CD8-positive, alpha-beta T cell (primary cell): ENCODE measurements at regions of chr2 and their contacts with region 1.

Region 1: DNA sequence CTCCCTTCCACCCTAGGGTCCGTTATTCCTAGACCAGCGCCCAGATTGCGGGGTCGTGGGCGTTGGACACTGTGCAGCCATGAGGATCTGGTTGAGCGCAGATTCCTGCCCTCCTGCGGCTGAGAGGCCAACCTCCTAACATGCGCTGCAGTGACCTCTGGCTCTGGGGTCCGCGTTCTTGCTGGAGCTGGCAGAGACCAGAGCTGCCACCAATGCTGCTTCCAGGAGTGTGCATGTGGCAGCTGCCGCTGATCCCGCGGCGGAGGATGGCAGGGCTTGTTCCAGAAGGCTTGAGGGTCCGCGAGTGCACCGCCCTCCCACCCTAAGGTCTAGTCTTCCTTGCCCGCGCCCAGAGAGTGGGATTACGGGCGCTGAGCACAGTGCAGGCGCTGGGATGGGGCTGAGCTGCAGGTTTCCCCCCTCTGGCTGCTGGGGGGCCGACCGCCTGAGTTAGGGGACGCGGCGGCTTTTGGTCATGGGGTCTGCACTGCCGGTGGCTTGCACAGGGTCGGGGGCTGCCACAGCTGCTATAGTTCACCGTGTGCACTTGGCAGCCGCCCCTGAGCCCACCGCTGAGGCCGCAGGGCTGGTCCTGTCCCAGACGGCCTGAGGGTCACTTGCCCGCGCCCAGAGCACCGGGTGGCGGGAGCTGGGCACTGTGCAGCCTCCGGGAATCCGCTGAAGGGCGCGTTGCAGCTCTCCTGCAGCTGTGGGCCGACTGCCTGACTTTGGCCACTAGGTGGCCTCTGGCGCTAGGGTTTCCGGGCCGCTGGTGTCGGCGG is 145.9 kb downstream of the CCDC74A start:
- DNase-seq: peak; percentile 28 to 75 (median 56)
- ATAC-seq: peak; percentile 54
- H3K4me3 ChIP-seq: peak overlapping the region; percentile 39 to 50
- H3K4me3 Mint-ChIP-seq: peak overlapping the region; percentile 67
- H3K27ac ChIP-seq: no peak overlapping the region
- H3K27ac Mint-ChIP-seq: no peak overlapping the region
- H3K4me1 ChIP-seq: peaks cover 14% of the 10 kb centered on the region
- H3K4me1 Mint-ChIP-seq: peaks cover 4% of the 10 kb centered on the region
- H3K27me3 ChIP-seq: peaks cover 0 to 5% of the 10 kb centered on the region in 2 experiments
- H3K27me3 Mint-ChIP-seq: peaks cover 33% of the 10 kb centered on the region
- CTCF ChIP-seq: peak; percentile 81

Region 2: DNA sequence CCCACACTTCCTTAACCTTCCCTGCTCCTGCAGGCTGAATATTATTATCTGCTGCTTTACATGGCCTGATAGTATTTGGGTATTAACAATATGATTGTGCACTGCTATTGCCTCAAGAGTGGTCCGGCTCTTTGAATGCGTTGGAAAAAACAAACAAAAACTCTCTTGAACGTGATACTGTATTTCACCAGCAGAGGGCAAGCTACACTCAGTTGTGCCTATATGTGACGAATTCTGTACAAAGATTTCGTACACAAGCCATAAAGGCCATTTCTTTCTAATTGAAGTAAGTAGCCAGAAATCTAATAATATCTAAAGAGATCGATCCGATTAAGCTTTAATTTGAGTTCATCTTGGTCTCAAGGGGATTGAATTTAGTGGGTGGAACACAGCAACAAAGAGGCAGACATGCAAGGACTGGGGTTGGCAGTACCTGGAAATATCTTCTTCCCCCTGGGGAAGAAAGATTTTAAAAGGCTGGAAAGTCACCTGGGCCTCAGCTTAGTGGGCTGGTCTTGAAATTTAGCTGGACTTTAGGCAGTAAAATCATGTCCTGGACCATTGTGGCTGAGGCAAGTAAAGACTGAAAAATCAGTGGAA is 260.3 kb before region 1 on chr2:
- CTCF ChIA-PET with region 1: interaction called, 32 read pairs
- POLR2A ChIA-PET with region 1: no interaction called
- intact Hi-C with region 1: loop called in 1 of 2 experiments (anchors 1 kb)
- DNase-seq: peak in 2 of 9 experiments; percentile 53 to 63
- ATAC-seq: no peak
- H3K4me3 ChIP-seq: no peak overlapping the region
- H3K4me3 Mint-ChIP-seq: no peak overlapping the region
- H3K27ac ChIP-seq: no peak overlapping the region
- H3K27ac Mint-ChIP-seq: no peak overlapping the region
- H3K4me1 ChIP-seq: no peaks in the 10 kb centered on the region
- H3K4me1 Mint-ChIP-seq: no peaks in the 10 kb centered on the region
- H3K27me3 ChIP-seq: no peaks in the 10 kb centered on the region
- H3K27me3 Mint-ChIP-seq: peaks cover 33% of the 10 kb centered on the region
- CTCF ChIP-seq: peak; percentile 94

Region 3: DNA sequence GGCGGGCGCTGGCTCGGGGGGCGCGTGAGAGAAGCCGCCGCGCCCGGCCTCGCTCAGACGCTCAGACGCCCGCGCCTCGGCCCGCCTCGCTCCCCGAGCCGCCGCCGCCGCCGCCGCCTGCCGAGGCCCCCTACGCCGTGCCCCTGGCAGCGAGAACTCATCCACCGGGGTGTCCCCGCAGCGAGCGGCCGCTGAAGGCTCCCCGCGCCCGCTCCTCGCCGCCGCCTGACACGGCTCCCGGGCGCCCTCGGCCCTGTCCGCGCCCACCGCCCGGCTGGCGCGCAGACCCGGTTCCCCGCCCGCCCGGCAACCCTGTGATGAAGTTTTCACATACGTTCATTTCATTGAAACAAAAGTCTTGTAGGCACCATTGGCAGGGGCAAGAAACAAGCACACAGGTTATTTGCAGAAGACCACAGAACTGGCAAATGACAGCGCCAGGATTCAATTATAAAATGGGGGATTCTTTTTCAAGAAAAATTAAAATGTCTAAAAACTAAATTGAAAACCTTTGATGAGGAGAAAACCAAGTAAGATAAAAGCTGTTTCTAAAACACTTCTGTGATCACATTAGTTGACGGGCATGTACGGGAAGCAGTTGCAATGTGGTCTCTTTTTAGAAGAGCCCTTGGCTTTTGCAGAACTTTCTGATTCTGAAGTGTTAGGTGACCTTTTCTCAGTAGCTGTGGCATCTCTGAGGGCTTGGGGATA is 248.2 kb before region 1 on chr2:
- CTCF ChIA-PET with region 1: no interaction called
- POLR2A ChIA-PET with region 1: no interaction called
- intact Hi-C with region 1: no loop called
- DNase-seq: no peak
- ATAC-seq: no peak
- H3K4me3 ChIP-seq: no peak overlapping the region
- H3K4me3 Mint-ChIP-seq: no peak overlapping the region
- H3K27ac ChIP-seq: no peak overlapping the region
- H3K27ac Mint-ChIP-seq: no peak overlapping the region
- H3K4me1 ChIP-seq: no peaks in the 10 kb centered on the region
- H3K4me1 Mint-ChIP-seq: peaks cover 6% of the 10 kb centered on the region
- H3K27me3 ChIP-seq: peaks cover 5 to 6% of the 10 kb centered on the region in 2 experiments
- H3K27me3 Mint-ChIP-seq: peaks cover 56% of the 10 kb centered on the region
- CTCF ChIP-seq: no peak

Region 4: GRCh38 chr2:131659168-131659572 is 14.4 kb before region 1 on chr2:
- CTCF ChIA-PET with region 1: interaction called, 17 read pairs
- POLR2A ChIA-PET with region 1: no interaction called
- intact Hi-C with region 1: no loop called
- DNase-seq: no peak
- ATAC-seq: no peak
- H3K4me3 ChIP-seq: no peak overlapping the region
- H3K4me3 Mint-ChIP-seq: no peak overlapping the region
- H3K27ac ChIP-seq: no peak overlapping the region
- H3K27ac Mint-ChIP-seq: no peak overlapping the region
- H3K4me1 ChIP-seq: no peaks in the 10 kb centered on the region
- H3K4me1 Mint-ChIP-seq: no peaks in the 10 kb centered on the region
- H3K27me3 ChIP-seq: no peaks in the 10 kb centered on the region
- H3K27me3 Mint-ChIP-seq: peaks cover 21% of the 10 kb centered on the region
- CTCF ChIP-seq: no peak

Region 5: GRCh38 chr2:131801210-131801744 is 127.7 kb after region 1 on chr2:
- CTCF ChIA-PET with region 1: interaction called, 15 read pairs
- POLR2A ChIA-PET with region 1: no interaction called
- intact Hi-C with region 1: no loop called
- DNase-seq: peak in 2 of 9 experiments; percentile 12 to 14
- ATAC-seq: no peak
- H3K4me3 ChIP-seq: no peak overlapping the region
- H3K4me3 Mint-ChIP-seq: peak overlapping the region; percentile 5
- H3K27ac ChIP-seq: no peak overlapping the region
- H3K27ac Mint-ChIP-seq: no peak overlapping the region
- H3K4me1 ChIP-seq: no peaks in the 10 kb centered on the region
- H3K4me1 Mint-ChIP-seq: peaks cover 3% of the 10 kb centered on the region
- H3K27me3 ChIP-seq: peaks cover 0 to 3% of the 10 kb centered on the region in 2 experiments
- H3K27me3 Mint-ChIP-seq: peaks cover 8% of the 10 kb centered on the region
- CTCF ChIP-seq: no peak